Head of caudate nucleus (tissue), 42 donors: ENCODE measurements at regions of chr11 and their contacts with region 1.

Region 1: GRCh38 chr11:31810779-31811647 is at the start of gene PAX6:
- DNase-seq: peak; percentile 40 to 89 (median 70)

Region 2: DNA sequence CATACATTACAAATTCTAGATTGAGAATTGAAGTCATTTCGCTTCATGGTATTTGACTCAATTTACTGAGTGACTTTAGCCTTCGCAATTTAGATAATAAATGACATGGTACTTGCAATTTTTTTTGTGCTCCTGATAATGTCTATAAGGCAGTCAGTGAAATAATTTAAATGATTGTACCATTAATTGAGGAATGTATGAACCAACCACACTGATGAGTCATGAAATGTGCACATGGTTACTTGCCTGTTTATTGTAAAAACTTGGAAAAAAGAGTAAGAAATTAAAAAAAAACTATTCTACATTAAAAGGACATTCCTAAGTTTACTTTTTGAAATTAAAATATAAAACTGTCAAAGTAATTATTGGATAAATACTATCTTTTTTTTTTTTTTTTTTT is 398.1 kb before region 1 on chr11:
- intact Hi-C with region 1: no loop called
- DNase-seq: no peak

Region 3: DNA sequence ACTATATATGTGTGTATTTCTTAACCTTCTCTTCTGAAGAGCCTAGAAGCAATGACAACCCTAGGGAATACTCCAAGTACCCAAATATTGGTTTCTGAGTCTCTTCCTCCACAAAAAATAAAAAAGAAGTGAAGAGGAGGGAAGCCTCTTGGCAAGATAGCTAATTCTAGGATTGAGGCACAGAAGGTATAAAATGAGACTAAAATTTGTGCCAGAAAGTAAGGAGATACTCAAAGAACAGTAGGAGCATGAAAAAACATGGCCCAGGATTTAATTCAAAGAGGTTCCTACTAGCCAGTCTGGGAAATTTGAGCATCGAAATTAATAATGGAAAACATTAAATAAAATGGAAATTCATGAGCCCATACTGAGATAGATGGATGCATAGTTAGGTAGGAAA is 111.9 kb before region 1 on chr11:
- intact Hi-C with region 1: no loop called
- DNase-seq: no peak

Region 4: GRCh38 chr11:31764766-31765165 is 46.2 kb before region 1 on chr11:
- intact Hi-C with region 1: loop called (anchors 5 kb)
- DNase-seq: peak in 3 of 42 donors; percentile 5 to 54 (median 52)

Region 5: GRCh38 chr11:31856248-31856647 is 45.2 kb after region 1 on chr11:
- intact Hi-C with region 1: no loop called
- DNase-seq: no peak